Mammary epithelial cell (primary cell): ENCODE measurements at regions of chr17 and their contacts with region 1.

Region 1: GRCh38 chr17:36808181-36808661 is 129.1 kb upstream of the LHX1 start:
- DNase-seq: peak; percentile 19
- H3K4me3 ChIP-seq: no peak overlapping the region
- H3K27ac ChIP-seq: no peak overlapping the region
- H3K4me1 ChIP-seq: peaks cover 9% of the 10 kb centered on the region
- H3K27me3 ChIP-seq: peaks cover 32% of the 10 kb centered on the region
- CTCF ChIP-seq: no peak

Region 2: DNA sequence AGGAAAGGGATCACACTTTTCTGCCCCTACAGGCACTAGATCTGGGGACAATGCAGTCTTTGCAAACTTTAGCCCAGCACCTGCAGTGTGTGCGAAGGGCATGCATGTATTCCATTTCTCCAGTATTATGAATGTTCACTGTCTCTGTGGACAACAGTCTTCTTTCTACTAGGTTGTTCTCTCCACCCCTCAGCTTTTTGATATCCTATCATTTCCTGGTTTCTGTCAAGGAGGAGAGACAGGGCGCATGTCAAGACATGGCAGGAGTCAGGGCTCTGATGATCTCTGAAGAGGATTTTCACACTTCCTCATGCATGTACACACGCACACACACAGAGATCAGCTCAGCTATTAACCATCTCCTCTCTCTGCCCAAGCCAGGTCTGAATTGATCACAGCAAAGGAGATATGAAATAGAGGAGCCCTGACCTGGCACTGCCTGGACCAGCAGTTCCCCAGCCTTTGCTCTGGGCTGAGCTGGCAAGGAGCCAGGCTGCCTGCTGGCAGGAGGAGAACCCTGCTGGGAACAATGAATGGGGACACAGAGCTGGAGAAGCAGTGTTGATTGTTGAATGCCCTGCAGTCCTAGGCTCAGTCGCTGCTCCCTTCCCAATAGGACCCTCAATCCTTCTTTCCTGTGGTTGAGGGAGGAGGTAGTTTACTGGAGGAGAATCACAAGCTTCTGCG is 1533.0 kb after region 1 on chr17:
- CTCF ChIA-PET with region 1: interaction called, 11 read pairs
- dilution Hi-C with region 1: no loop called
- in situ Hi-C with region 1: no loop called
- intact Hi-C with region 1: no loop called
- DNase-seq: no peak
- H3K4me3 ChIP-seq: no peak overlapping the region
- H3K27ac ChIP-seq: no peak overlapping the region
- H3K4me1 ChIP-seq: peaks cover 6% of the 10 kb centered on the region
- H3K27me3 ChIP-seq: no peaks in the 10 kb centered on the region
- CTCF ChIP-seq: no peak